ENCODE measurements at regions of chr13 and their contacts with region 1.

Region 1: GRCh38 chr13:52738719-52739467 is 727 bp downstream of the CNMD start:
- DNase-seq: peak in 1 of 2 experiments; percentile 82
- H3K4me3 ChIP-seq: peak overlapping the region; percentile 63 to 76 (median 69)
- H3K27ac ChIP-seq: peak overlapping the region; percentile 53; the same call in 1 of the 2 replicates
- H3K4me1 ChIP-seq: peaks cover 3 to 20% (median 18%) of the 10 kb centered on the region in 4 experiments
- H3K27me3 ChIP-seq: no peaks in the 10 kb centered on the region
- CTCF ChIP-seq: peak; percentile 63 to 94 (median 65)
- EP300 ChIP-seq: no peak; a peak in 1 of 3 replicates
- POLR2A ChIP-seq: peak in 1 of 2 experiments; percentile 59; a peak in 2 of 3 replicates
- RAD21 ChIP-seq: peak; percentile 27 to 66

Region 2: DNA sequence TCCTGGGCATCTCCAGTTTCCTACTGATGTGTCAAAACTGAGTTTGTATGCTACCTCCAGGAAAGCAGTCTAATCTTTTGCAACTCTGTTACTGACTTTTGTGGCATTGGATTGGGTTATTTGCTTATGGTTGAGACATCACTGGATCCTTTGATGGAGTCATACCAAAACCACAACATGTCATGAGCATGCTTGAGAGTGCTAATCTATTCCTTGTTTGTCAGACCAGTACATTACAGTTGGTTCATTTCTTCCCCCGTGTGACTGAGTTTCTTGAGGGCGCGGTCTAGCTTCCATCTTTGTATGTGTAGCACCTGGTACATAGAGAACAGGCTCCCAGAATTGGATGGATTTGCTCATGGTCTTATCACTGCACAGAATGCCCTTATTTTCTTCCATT is 43.0 kb before region 1 on chr13:
- CTCF ChIA-PET with region 1: interaction called, 18 read pairs
- POLR2A ChIA-PET with region 1: interaction called, 4 read pairs
- DNase-seq: no peak
- H3K4me3 ChIP-seq: no peak overlapping the region
- H3K27ac ChIP-seq: no peak overlapping the region
- H3K4me1 ChIP-seq: no peaks in the 10 kb centered on the region
- H3K27me3 ChIP-seq: no peaks in the 10 kb centered on the region
- CTCF ChIP-seq: no peak
- EP300 ChIP-seq: no peak
- POLR2A ChIP-seq: no peak
- RAD21 ChIP-seq: no peak

Region 3: GRCh38 chr13:52713894-52714293 is 25.0 kb before region 1 on chr13:
- CTCF ChIA-PET with region 1: interaction called, 25 read pairs
- POLR2A ChIA-PET with region 1: interaction called, 11 read pairs
- DNase-seq: no peak
- H3K4me3 ChIP-seq: no peak overlapping the region
- H3K27ac ChIP-seq: no peak overlapping the region
- H3K4me1 ChIP-seq: peaks cover 0 to 4% (median 3%) of the 10 kb centered on the region in 4 experiments; a peak in 3 of 7 replicates
- H3K27me3 ChIP-seq: no peaks in the 10 kb centered on the region
- CTCF ChIP-seq: no peak
- EP300 ChIP-seq: no peak
- POLR2A ChIP-seq: no peak
- RAD21 ChIP-seq: no peak

Region 4: DNA sequence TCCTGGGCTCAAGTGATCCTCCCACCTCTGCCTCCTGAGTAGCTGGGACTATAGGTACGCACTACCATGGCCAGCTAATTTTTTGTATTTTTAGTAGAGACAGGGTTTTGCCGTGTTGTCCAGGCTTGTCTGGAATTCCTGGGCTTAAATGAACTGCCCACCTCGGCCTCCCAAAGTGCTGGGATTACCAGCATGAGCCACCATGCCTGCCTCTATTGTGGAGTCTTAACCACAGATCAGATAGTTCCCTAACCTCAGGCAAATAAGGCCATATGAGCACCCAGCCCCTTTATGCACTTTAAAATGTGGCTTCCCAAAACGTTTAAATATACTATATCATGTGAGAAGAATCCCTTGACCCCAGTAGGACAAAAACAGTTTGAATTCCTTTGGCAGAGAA is 15.7 kb before region 1 on chr13:
- CTCF ChIA-PET with region 1: interaction called, 28 read pairs
- POLR2A ChIA-PET with region 1: interaction called, 12 read pairs
- DNase-seq: no peak
- H3K4me3 ChIP-seq: no peak overlapping the region
- H3K27ac ChIP-seq: no peak overlapping the region
- H3K4me1 ChIP-seq: no peaks in the 10 kb centered on the region
- H3K27me3 ChIP-seq: no peaks in the 10 kb centered on the region
- CTCF ChIP-seq: no peak
- EP300 ChIP-seq: no peak
- POLR2A ChIP-seq: no peak
- RAD21 ChIP-seq: no peak

Region 5: DNA sequence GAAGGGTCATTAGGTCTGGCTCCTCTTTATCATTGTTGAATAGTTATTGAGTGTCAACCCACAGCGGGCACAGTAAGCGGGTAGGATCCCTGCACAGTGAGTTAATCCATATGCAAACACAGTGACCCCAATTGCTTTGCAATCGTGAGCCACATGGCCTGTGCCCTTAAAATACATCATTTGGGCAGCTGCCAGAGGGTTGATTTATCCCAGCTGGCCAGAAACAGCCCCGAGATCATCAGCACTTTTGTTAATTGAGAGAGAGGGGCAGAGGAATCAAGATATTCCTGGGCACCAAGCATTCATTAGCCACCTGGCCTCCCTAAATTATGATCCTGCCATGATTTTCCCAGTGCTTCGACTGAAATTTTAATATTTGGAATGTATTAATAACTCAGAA is 10.5 kb after region 1 on chr13:
- CTCF ChIA-PET with region 1: interaction called, 10 read pairs
- POLR2A ChIA-PET with region 1: interaction called, 4 read pairs
- DNase-seq: no peak
- H3K4me3 ChIP-seq: no peak overlapping the region
- H3K27ac ChIP-seq: no peak overlapping the region
- H3K4me1 ChIP-seq: no peaks in the 10 kb centered on the region
- H3K27me3 ChIP-seq: no peaks in the 10 kb centered on the region; a peak in 1 of 7 replicates
- CTCF ChIP-seq: no peak
- EP300 ChIP-seq: no peak
- POLR2A ChIP-seq: no peak
- RAD21 ChIP-seq: no peak

Region 6: GRCh38 chr13:52870827-52871226 is 131.9 kb after region 1 on chr13:
- CTCF ChIA-PET with region 1: no interaction called
- POLR2A ChIA-PET with region 1: no interaction called
- DNase-seq: no peak
- H3K4me3 ChIP-seq: no peak overlapping the region
- H3K27ac ChIP-seq: no peak overlapping the region
- H3K4me1 ChIP-seq: peaks cover 0 to 5% (median 2%) of the 10 kb centered on the region in 4 experiments; a peak in 2 of 7 replicates
- H3K27me3 ChIP-seq: 0 out of 7 replicates have a peak, but pooled peaks cover 0 to 2% (median 0%) of the 10 kb centered on the region in 4 experiments
- CTCF ChIP-seq: no peak
- EP300 ChIP-seq: no peak
- POLR2A ChIP-seq: no peak
- RAD21 ChIP-seq: no peak

Measured in H1 (cell line).